T-cell (primary cell): ENCODE measurements at regions of chr4 and their contacts with region 1.

Region 1: GRCh38 chr4:77308843-77309242 is 151.8 kb downstream of the CCNG2 start:
- DNase-seq: peak in 1 of 35 experiments; percentile 21
- ATAC-seq: peak in 1 of 4 experiments; percentile 30
- H3K4me3 ChIP-seq: no peak overlapping the region
- H3K4me3 Mint-ChIP-seq: no peak overlapping the region
- H3K27ac ChIP-seq: no peak overlapping the region
- H3K27ac Mint-ChIP-seq: no peak overlapping the region
- H3K4me1 ChIP-seq: no peaks in the 10 kb centered on the region
- H3K4me1 Mint-ChIP-seq: no peaks in the 10 kb centered on the region
- H3K27me3 ChIP-seq: peaks cover 0 to 2% of the 10 kb centered on the region in 2 experiments
- H3K27me3 Mint-ChIP-seq: peaks cover 3% of the 10 kb centered on the region in 2 donors

Region 2: DNA sequence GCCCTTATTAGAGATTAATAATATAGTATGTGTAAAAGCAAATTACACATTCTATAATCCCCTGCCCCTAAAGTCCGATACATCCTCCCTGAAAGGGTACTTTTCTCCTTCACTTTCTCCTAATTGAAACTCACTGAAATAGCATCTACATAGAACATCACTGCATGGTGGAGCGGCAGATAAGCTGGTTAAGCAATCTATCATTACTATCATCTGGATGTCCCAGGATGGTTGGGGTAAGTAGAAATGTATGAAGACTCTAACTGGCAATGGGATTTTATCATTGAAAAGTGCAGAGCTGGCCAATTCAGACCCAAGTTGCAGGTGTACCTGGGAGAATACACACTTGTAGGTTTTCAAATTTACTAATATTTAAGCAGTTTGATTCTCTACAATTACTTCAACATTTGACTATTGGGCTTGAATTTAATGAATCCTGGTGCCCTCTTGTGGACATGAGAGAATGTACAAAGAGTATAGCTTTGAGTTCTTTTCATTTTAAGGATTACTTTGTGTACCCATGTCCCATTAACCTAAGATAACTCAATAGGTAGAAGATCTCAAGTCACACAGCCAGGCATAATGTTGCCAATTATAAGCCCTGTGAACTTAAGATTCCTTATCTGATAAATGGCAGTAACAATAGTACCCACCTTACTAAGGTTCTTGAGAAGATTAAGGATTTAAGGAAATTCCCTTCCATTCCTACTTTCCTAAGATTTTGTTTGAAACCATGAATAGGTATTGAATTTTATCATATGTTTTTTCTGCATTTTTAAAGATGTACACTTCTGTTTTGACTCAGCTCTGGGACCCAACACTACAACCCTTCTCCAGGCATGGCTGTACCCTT is 804.0 kb before region 1 on chr4:
- CTCF ChIA-PET with region 1: no interaction called
- POLR2A ChIA-PET with region 1: interaction called in 1 of 2 experiments, 11 read pairs
- DNase-seq: peak in 3 of 35 experiments; percentile 3 to 57 (median 4)
- ATAC-seq: no peak
- H3K4me3 ChIP-seq: no peak overlapping the region
- H3K4me3 Mint-ChIP-seq: no peak overlapping the region
- H3K27ac ChIP-seq: no peak overlapping the region
- H3K27ac Mint-ChIP-seq: no peak overlapping the region
- H3K4me1 ChIP-seq: no peaks in the 10 kb centered on the region
- H3K4me1 Mint-ChIP-seq: no peaks in the 10 kb centered on the region
- H3K27me3 ChIP-seq: no peaks in the 10 kb centered on the region
- H3K27me3 Mint-ChIP-seq: peaks cover 9 to 14% of the 10 kb centered on the region in 2 donors

Region 3: DNA sequence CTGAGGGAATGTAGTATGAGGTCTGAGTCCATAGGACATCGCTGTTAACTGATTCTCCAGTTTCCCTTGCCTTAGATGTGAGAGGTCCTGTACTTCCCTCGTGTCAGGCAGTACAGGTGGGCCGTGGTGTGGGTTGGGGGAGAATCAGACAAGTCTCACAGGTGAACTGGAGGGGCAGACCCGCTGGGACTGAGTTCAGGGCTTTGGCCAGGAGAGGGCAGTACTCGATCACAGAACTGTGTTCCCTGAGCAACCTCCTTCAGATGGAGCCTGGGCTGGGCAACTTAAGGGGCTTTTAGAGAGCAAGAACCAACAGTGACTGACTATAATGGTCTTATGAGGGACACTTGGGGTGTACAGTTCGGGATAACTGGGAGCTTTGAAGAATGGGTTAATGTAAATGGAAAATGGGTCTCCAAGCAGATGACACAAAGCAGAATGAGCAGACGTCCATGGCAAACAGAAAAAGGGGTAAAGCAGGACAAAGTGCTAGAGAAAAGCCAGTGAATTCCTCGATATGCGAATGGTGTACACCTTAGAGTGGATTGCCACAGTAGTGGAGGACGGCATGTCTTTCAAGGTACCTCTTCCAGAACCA is 68.3 kb before region 1 on chr4:
- CTCF ChIA-PET with region 1: interaction called in 1 of 2 experiments, 13 read pairs
- POLR2A ChIA-PET with region 1: no interaction called
- DNase-seq: peak in 34 of 35 experiments; percentile 5 to 60 (median 31)
- ATAC-seq: peak; percentile 51 to 58 (median 55)
- H3K4me3 ChIP-seq: no peak overlapping the region
- H3K4me3 Mint-ChIP-seq: no peak overlapping the region
- H3K27ac ChIP-seq: no peak overlapping the region
- H3K27ac Mint-ChIP-seq: no peak overlapping the region
- H3K4me1 ChIP-seq: no peaks in the 10 kb centered on the region
- H3K4me1 Mint-ChIP-seq: no peaks in the 10 kb centered on the region
- H3K27me3 ChIP-seq: peaks cover 0 to 10% of the 10 kb centered on the region in 2 experiments
- H3K27me3 Mint-ChIP-seq: peaks cover 13 to 14% of the 10 kb centered on the region in 2 donors